ENCODE measurements at regions of chr3 and their contacts with region 1.

Region 1: DNA sequence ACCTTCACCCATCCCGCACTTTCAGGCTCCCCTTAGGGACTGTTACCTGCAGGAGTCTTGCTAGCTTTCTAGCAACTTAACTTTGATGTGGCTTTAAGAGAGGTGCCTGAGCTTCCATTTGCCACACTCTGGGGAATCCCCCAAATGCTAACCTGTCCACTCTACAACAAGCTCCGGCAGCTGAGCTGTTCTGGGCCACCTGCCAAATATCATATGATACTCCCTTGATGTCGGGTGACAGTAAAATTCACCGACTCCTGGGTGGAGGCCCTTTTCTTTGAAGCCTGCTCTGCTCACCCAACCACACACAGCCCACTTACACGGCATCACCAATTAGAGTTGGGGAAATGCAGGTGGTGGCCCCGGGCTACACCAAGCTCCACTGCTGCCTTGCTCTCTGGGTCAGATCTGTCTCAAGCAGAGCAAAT is 38.0 kb upstream of the XCR1 start:
- DNase-seq: peak; percentile 48 to 95 (median 84)
- ATAC-seq: peak; percentile 85 to 92
- H3K4me3 Mint-ChIP-seq: peak overlapping the region; percentile 1 to 86 (median 72)
- H3K27ac Mint-ChIP-seq: peak overlapping the region; percentile 68 to 94 (median 86)
- H3K4me1 Mint-ChIP-seq: peaks cover 35 to 79% (median 74%) of the 10 kb centered on the region in 4 donors
- H3K27me3 Mint-ChIP-seq: no peaks in the 10 kb centered on the region

Region 2: DNA sequence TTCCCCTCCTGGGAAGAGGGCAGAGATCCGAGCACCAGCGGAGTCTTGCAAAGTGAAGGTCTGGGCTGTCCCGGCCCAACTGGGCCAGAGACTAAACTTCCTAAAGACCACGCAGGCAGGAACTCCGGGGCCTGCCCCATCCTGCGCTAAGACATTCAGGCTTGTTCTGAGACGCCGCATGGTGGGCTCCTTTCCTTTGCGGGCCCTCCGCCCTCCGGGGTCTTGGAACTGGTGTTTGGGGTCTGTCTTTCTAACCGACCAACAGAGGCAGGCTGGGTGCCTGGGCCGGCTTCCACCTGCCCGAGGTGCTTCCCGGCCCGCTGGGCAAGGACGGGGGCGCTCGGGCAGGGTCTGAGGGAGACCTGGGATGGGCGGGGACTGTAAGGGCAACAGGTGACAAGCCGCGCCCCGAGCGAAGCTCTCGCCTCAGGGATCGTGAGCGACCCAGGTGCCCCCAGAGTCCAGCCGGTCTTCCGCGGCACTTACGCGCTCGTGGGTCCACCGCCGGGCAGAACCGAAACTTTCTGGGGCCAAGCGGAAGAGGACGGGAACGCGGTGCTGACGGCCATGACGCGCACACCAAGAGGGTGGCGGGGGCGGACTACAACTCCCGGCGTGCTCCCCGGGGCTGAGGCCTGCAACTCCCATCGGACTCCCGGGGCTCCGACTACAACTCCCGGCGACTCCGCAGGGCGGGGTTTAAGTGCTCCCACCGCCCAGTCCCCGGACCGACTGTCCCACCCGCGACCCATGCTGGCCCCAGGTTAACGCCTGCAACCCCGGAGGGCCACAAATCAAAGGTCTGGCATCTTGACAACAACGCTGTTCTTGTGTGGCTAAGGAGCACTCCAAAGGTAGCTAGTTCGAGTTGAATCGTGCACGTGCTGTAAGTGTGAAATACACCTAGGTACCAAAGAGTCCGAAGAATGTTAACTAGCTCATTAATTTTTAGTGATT is 69.8 kb before region 1 on chr3 and contains the start of gene FYCO1:
- POLR2A ChIA-PET with region 1: interaction called, 14 read pairs
- DNase-seq: peak; percentile 74 to 91 (median 83)
- ATAC-seq: peak; percentile 93 to 96
- H3K4me3 Mint-ChIP-seq: peak within 1 kb of the TSS; percentile 83 to 91 (median 88)
- H3K27ac Mint-ChIP-seq: peak within 1 kb of the TSS; percentile 73 to 95 (median 90)
- H3K4me1 Mint-ChIP-seq: peaks cover 16 to 46% (median 42%) of the 10 kb centered on the region in 4 donors
- H3K27me3 Mint-ChIP-seq: peaks cover 0 to 7% (median 0%) of the 10 kb centered on the region in 5 donors
- polyA plus RNA-seq, gene FYCO1: 1.7 to 6.0 (median 2.6) TPM

Region 3: GRCh38 chr3:46078712-46079400 is 13.5 kb after region 1 on chr3:
- POLR2A ChIA-PET with region 1: interaction called, 11 read pairs
- DNase-seq: peak; percentile 76 to 95 (median 85)
- ATAC-seq: peak; percentile 99 to 100
- H3K4me3 Mint-ChIP-seq: peak overlapping the region in 3 of 10 donors; percentile 32 to 52 (median 37)
- H3K27ac Mint-ChIP-seq: peak overlapping the region in 1 of 10 donors; percentile 20
- H3K4me1 Mint-ChIP-seq: peaks cover 2 to 10% (median 6%) of the 10 kb centered on the region in 4 donors
- H3K27me3 Mint-ChIP-seq: peaks cover 0 to 1% (median 0%) of the 10 kb centered on the region in 5 donors

Region 4: GRCh38 chr3:46127501-46127900 is 62.2 kb after region 1 on chr3:
- POLR2A ChIA-PET with region 1: no interaction called
- DNase-seq: no peak
- ATAC-seq: no peak
- H3K4me3 Mint-ChIP-seq: no peak overlapping the region
- H3K27ac Mint-ChIP-seq: no peak overlapping the region
- H3K4me1 Mint-ChIP-seq: peaks cover 6 to 20% (median 11%) of the 10 kb centered on the region in 4 donors
- H3K27me3 Mint-ChIP-seq: peaks cover 0 to 1% (median 0%) of the 10 kb centered on the region in 5 donors